Activated CD8-positive, alpha-beta memory T cell treated with anti-CD3 and anti-CD28 coated beads, Interleukin-2, amount 10 ng/mL, durations not matched to agents 7 days and 5 days (primary cell): ENCODE measurements at regions of chr17 and their contacts with region 1.

Region 1: GRCh38 chr17:409848-410545 is 57.4 kb upstream of the RPH3AL start:
- DNase-seq: peak; percentile 100
- ATAC-seq: peak; percentile 88
- H3K4me3 Mint-ChIP-seq: peak overlapping the region; percentile 78
- H3K27ac Mint-ChIP-seq: peak overlapping the region; percentile 92
- H3K4me1 Mint-ChIP-seq: peaks cover 54% of the 10 kb centered on the region
- H3K27me3 Mint-ChIP-seq: peaks cover 3% of the 10 kb centered on the region

Region 2: DNA sequence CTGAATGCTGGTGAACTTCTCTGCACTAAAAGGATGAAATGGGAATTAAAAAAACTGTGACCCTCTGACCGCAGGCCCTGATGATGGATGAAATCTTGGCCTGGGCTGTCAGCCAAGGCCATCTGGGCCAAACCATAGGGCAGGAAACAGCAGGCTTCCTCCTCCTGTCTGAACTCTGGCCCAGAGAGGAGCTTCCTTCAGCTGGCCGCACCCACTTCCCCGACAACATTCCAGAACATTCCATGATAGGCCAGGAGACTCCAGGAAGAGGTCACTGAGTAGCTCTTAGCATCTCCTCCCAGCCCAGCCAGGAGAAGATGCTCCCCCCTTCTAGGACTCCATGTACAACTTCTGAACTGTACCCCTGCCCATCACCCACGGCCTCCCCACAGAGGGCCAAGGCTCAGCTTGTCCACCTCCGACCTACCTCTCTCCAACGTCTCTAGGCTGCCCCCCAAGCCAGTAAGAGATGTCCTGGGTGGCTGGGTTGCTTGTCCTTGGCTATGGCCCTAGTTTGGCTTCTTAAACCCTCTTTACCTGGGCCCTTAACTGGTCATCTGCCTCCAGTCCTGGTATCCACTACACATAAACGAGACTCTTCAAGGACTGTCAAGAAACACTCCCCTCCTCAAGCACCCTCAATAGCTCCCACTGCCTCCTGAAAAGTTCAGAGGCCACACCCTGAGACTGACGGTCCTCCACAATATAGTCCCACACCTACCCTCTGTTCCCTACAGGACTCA is 59.1 kb before region 1 on chr17:
- CTCF ChIA-PET with region 1: no interaction called
- DNase-seq: no peak
- ATAC-seq: no peak
- H3K4me3 Mint-ChIP-seq: no peak overlapping the region
- H3K27ac Mint-ChIP-seq: no peak overlapping the region
- H3K4me1 Mint-ChIP-seq: no peaks in the 10 kb centered on the region
- H3K27me3 Mint-ChIP-seq: no peaks in the 10 kb centered on the region

Region 3: DNA sequence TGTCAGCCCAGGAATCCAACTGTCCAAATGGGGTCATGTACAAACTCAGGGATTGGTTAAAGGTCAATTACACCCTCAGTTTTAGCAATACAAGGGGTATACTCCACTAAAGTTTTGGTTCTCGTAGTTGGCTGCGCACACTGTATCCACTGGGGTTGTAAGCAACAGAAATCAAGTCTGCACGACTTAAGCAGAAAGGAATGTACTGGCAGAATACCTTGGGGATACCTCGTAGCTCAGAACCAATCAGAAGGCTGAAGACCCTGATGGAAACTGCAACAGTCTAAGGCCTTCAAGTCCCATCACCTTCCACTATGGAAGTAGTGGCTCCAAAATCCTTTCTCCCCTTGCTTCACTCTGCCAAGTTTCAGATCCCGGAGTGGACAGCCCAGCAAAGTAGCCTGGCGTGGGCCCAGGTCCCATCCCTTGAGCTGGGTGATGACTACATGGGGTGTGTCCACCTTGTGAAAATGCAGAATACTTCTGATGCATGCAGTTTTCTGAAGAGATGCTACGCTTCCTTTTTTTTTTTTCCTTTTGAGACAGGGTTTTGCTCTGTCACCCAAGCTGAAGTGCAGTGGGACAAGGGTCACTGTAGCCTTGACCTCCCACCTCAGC is 36.3 kb before region 1 on chr17:
- CTCF ChIA-PET with region 1: no interaction called
- DNase-seq: no peak
- ATAC-seq: no peak
- H3K4me3 Mint-ChIP-seq: no peak overlapping the region
- H3K27ac Mint-ChIP-seq: no peak overlapping the region
- H3K4me1 Mint-ChIP-seq: no peaks in the 10 kb centered on the region
- H3K27me3 Mint-ChIP-seq: peaks cover 2% of the 10 kb centered on the region

Region 4: DNA sequence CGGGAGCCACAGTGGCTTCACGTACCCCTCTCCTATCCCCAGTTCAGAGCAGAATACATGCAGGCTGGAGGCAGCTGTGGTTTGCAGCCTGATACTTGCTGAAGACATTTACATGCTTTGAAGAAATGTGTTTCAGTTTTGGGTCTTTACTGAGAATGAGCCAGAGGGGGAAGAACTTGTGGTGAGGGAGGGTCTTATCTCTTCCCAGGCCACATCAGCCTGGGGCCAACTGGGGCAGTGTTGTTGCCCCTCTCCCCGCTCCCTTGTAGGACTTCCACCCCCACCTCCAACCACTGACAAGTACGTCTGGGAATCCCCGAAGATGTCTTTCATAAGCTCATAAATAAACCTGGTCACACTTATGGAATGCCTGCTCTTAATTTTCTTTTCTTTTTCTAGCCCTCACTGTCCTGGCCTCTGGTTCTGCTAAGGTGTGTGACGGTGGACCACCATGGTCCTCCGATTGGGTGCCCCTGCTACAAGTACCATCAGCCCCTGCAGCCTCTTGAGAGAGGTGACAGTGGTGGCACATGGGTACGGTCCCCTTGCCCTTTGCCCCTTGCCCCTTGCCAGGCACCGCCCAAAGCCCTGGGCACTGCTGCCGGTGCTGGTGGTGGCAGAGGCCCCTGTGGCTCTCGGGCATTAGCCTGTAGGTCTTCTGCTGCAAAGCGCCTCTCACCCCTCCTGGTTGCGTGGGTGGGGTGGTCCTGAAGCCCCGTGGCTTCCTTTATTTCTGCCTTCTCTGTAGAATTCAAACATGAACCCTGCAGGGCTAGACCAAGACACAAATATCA is 87.4 kb after region 1 on chr17:
- CTCF ChIA-PET with region 1: interaction called, 12 read pairs
- DNase-seq: no peak
- ATAC-seq: peak; percentile 34
- H3K4me3 Mint-ChIP-seq: no peak overlapping the region
- H3K27ac Mint-ChIP-seq: no peak overlapping the region
- H3K4me1 Mint-ChIP-seq: peaks cover 34% of the 10 kb centered on the region
- H3K27me3 Mint-ChIP-seq: peaks cover 34% of the 10 kb centered on the region

Region 5: DNA sequence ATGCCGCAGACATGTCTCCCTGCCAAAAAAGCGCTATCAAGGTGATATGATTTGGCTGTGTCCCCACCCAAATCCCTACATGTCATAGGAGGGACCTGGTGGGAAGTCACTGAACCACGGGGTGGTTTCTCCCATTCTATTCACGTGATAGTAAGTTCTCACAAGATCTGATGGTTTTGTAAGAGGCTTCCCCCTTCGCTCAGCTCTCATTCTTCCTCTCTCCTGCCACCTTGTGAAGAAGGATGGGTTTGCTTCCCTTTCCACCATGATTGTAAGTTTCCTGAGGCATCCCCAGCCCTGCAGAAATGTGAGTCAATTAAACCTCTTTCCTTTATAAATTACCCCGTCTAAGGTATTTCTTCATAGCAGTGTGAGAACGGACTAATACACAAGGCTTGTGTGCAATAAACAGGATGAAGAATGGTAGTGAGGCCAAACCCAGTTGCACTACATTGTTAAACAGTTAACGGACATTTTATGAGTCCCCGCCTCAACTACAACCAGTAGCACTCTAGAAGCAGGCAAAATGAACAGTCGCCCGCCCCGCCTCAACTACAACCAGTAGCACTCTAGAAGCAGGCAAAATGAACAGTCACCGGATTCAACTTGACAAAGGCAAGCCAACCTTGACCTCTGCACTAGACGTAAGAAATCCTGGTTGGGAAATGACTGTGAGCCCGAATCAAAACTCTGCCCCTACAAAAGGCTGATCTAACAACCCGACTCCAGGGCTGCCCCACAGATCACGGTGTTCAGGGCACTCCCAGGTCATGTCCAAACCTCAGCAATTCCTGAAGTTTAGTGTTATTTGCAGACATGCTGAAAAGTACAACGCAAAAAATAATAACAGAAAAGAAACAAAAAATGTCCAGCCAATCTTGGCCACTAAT is 278.3 kb after region 1 on chr17:
- CTCF ChIA-PET with region 1: interaction called, 19 read pairs
- DNase-seq: no peak
- ATAC-seq: no peak
- H3K4me3 Mint-ChIP-seq: no peak overlapping the region
- H3K27ac Mint-ChIP-seq: no peak overlapping the region
- H3K4me1 Mint-ChIP-seq: peaks cover 3% of the 10 kb centered on the region
- H3K27me3 Mint-ChIP-seq: no peaks in the 10 kb centered on the region

Region 6: GRCh38 chr17:700504-701094 is 290.6 kb after region 1 on chr17:
- CTCF ChIA-PET with region 1: interaction called, 128 read pairs
- DNase-seq: no peak
- ATAC-seq: peak; percentile 55
- H3K4me3 Mint-ChIP-seq: no peak overlapping the region
- H3K27ac Mint-ChIP-seq: no peak overlapping the region
- H3K4me1 Mint-ChIP-seq: peaks cover 4% of the 10 kb centered on the region
- H3K27me3 Mint-ChIP-seq: no peaks in the 10 kb centered on the region

Region 7: GRCh38 chr17:752002-752619 is 342.1 kb after region 1 on chr17 and contains the start of gene GEMIN4:
- CTCF ChIA-PET with region 1: interaction called, 19 read pairs
- DNase-seq: peak; percentile 96
- ATAC-seq: peak; percentile 88
- H3K4me3 Mint-ChIP-seq: peak within 1 kb of the TSS; percentile 89
- H3K27ac Mint-ChIP-seq: peak within 1 kb of the TSS; percentile 93
- H3K4me1 Mint-ChIP-seq: peaks cover 32% of the 10 kb centered on the region
- H3K27me3 Mint-ChIP-seq: no peaks in the 10 kb centered on the region
- total RNA-seq, gene GEMIN4: 40.8 to 43.0 TPM